Mammary epithelial cell (primary cell): ENCODE measurements at regions of chr5 and their contacts with region 1.

Region 1: DNA sequence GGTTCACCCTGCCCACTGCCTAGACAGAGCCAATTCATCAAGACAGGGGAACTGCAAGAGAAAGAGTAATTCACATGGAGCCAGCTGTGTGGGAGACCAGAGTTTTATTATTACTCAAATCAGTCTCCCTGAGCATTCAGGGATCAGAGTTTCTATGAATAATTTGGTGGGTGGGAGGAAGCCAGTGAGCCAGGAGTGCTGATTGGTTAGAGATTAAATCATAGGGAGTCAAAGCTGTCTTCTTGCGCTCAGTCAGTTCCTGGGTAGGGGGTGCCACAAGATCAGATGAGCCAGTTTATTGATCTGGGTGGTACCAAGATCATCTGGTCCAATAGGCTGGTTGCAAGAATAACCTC is 24.5 kb downstream of the TBCA start:
- DNase-seq: no peak
- H3K4me3 ChIP-seq: no peak overlapping the region
- H3K27ac ChIP-seq: no peak overlapping the region
- H3K4me1 ChIP-seq: no peaks in the 10 kb centered on the region
- H3K27me3 ChIP-seq: no peaks in the 10 kb centered on the region
- CTCF ChIP-seq: no peak

Region 2: GRCh38 chr5:77812926-77813589 is 61.4 kb after region 1 on chr5:
- CTCF ChIA-PET with region 1: no interaction called
- dilution Hi-C with region 1: no loop called
- in situ Hi-C with region 1: no loop called
- intact Hi-C with region 1: no loop called
- DNase-seq: no peak
- H3K4me3 ChIP-seq: no peak overlapping the region
- H3K27ac ChIP-seq: no peak overlapping the region
- H3K4me1 ChIP-seq: no peaks in the 10 kb centered on the region
- H3K27me3 ChIP-seq: peaks cover 2% of the 10 kb centered on the region
- CTCF ChIP-seq: no peak

Region 3: DNA sequence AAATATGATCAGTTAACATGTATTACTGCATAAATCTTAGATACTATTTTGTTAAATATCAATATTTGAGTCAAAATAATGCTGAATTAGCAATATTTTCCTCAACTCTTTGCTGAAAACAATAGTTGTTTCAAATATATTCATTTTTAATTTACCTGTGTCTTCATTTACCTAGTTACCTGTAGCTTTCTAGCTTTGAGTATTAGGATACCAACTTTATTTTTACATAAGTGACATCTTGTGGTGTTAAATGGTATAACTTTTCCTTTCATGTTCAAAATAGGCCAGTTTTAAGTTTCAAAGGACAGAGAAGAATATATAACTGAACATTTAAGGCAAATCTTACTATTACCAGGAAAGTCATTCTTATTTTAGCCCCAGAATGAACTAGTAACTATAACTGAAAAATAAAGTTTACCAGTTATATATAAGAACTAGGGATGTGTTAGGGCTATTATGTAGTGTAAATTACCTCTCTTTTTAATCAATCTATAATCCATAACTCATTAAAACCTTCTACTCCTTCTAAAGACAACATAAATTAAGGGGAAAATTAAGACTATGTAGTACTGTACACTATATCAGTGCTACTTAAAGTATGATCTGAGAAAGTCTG is 517.5 kb after region 1 on chr5:
- CTCF ChIA-PET with region 1: no interaction called
- dilution Hi-C with region 1: no loop called
- in situ Hi-C with region 1: no loop called
- intact Hi-C with region 1: loop called (anchors 10 kb)
- DNase-seq: no peak
- H3K4me3 ChIP-seq: no peak overlapping the region
- H3K27ac ChIP-seq: no peak overlapping the region
- H3K4me1 ChIP-seq: no peaks in the 10 kb centered on the region
- H3K27me3 ChIP-seq: no peaks in the 10 kb centered on the region
- CTCF ChIP-seq: peak; percentile 41 to 45